ENCODE measurements at regions of chr2 and their contacts with region 1.

Region 1: DNA sequence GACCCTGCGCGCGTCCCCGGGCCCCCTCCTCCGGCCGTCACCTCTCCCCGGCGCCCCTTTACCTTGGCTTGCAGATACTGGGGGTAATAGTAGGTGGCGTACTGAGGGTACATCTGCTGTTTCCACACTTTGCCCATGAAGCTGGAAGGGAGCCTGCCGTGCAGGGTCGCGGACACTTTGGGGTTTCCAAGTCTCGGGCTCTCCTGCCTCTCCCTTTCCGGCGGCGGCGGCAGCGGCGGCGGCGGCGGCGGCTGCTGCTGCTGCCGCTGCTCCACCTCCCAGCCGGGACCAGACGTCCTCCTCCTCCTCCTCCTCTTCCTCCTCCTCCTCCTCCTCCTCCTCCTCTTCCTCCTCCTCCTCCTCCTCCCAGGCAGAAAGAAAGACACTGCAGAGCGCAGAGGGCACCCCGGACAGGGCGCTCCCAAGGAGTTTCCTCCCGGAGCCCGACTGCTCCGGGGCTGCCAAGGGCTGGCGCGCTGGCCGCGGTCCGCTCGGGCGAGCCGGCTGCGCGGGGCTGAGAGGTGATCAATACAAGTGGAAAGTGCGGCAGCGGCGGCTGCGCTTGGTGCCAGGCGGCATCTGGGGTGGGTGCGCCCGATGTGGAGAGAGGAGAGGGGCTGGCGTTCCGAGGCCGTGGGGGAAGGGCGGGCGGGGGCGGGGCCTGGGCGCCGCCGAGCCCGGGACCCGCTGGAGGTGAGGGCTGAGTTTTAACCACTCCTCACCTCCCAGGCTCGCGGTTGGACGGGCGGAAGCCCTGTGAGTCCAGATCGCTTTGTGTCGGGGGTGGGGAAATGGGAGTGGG is at the start of gene RBMS1:
- DNase-seq: peak; percentile 44
- ATAC-seq: peak; percentile 47
- H3K4me3 ChIP-seq: peak within 1 kb of the TSS; percentile 98
- H3K27ac ChIP-seq: peak within 1 kb of the TSS; percentile 100
- H3K4me1 ChIP-seq: peaks cover 6% of the 10 kb centered on the region
- H3K27me3 ChIP-seq: no peaks in the 10 kb centered on the region
- CTCF ChIP-seq: no peak
- POLR2A ChIP-seq: no peak
- RAD21 ChIP-seq: peak; percentile 26; the same call in 1 of the 2 replicates
- total RNA-seq, gene RBMS1: 64.9 and 73.6 TPM in 2 replicates

Region 2: GRCh38 chr2:160324161-160324800 is 169.1 kb before region 1 on chr2:
- CTCF ChIA-PET with region 1: interaction called, 4 read pairs
- POLR2A ChIA-PET with region 1: no interaction called
- dilution Hi-C with region 1: no loop called
- in situ Hi-C with region 1: no loop called
- intact Hi-C with region 1: loop called (anchors 5 kb)
- DNase-seq: peak; percentile 70
- ATAC-seq: peak; percentile 69
- H3K4me3 ChIP-seq: no peak overlapping the region
- H3K27ac ChIP-seq: no peak overlapping the region
- H3K4me1 ChIP-seq: peaks cover 19% of the 10 kb centered on the region
- H3K27me3 ChIP-seq: no peaks in the 10 kb centered on the region
- CTCF ChIP-seq: peak; percentile 71
- POLR2A ChIP-seq: no peak
- RAD21 ChIP-seq: peak; percentile 73

Region 3: DNA sequence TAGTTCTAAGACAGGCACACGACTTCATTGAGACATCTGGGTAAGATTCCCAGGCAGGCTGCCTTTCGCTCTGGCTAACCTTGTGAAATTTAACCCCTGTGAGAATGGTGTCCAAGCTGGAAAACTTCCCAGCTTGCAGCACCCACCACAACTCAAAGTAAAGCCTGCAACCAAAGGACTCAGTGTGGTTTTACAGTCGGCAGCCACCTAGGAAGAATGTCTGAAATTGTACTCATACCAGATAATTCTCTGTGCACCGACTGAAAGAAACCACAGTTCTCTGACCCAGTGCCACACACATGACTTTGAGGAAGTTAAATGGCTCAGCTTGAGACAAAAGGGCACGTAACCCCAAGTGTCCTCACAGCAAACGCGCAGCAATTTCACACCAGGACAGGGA is 125.5 kb before region 1 on chr2:
- CTCF ChIA-PET with region 1: no interaction called
- POLR2A ChIA-PET with region 1: no interaction called
- dilution Hi-C with region 1: no loop called
- in situ Hi-C with region 1: no loop called
- intact Hi-C with region 1: no loop called
- DNase-seq: peak; percentile 98
- ATAC-seq: peak; percentile 59
- H3K4me3 ChIP-seq: no peak overlapping the region
- H3K27ac ChIP-seq: peak overlapping the region; percentile 45; the same call in 1 of the 2 replicates
- H3K4me1 ChIP-seq: peaks cover 37% of the 10 kb centered on the region
- H3K27me3 ChIP-seq: no peaks in the 10 kb centered on the region
- CTCF ChIP-seq: no peak
- POLR2A ChIP-seq: no peak
- RAD21 ChIP-seq: peak; percentile 32; the same call in 1 of the 2 replicates

Region 4: GRCh38 chr2:160482673-160483072 is 10.8 kb before region 1 on chr2:
- CTCF ChIA-PET with region 1: interaction called, 4 read pairs
- POLR2A ChIA-PET with region 1: interaction called, 10 read pairs
- dilution Hi-C with region 1: no loop called
- in situ Hi-C with region 1: no loop called
- intact Hi-C with region 1: no loop called
- DNase-seq: no peak
- ATAC-seq: no peak
- H3K4me3 ChIP-seq: no peak overlapping the region
- H3K27ac ChIP-seq: no peak overlapping the region
- H3K4me1 ChIP-seq: peaks cover 23% of the 10 kb centered on the region
- H3K27me3 ChIP-seq: no peaks in the 10 kb centered on the region
- CTCF ChIP-seq: no peak
- POLR2A ChIP-seq: no peak
- RAD21 ChIP-seq: no peak

Region 5: GRCh38 chr2:160747491-160748169 is 254.2 kb after region 1 on chr2:
- CTCF ChIA-PET with region 1: no interaction called
- POLR2A ChIA-PET with region 1: no interaction called
- dilution Hi-C with region 1: no loop called
- in situ Hi-C with region 1: no loop called
- intact Hi-C with region 1: loop called (anchors 10 kb)
- DNase-seq: peak; percentile 62
- ATAC-seq: peak; percentile 91
- H3K4me3 ChIP-seq: no peak overlapping the region
- H3K27ac ChIP-seq: peak overlapping the region; percentile 20; the same call in 1 of the 2 replicates
- H3K4me1 ChIP-seq: peaks cover 11% of the 10 kb centered on the region
- H3K27me3 ChIP-seq: no peaks in the 10 kb centered on the region
- CTCF ChIP-seq: no peak
- POLR2A ChIP-seq: no peak
- RAD21 ChIP-seq: no peak

Region 6: DNA sequence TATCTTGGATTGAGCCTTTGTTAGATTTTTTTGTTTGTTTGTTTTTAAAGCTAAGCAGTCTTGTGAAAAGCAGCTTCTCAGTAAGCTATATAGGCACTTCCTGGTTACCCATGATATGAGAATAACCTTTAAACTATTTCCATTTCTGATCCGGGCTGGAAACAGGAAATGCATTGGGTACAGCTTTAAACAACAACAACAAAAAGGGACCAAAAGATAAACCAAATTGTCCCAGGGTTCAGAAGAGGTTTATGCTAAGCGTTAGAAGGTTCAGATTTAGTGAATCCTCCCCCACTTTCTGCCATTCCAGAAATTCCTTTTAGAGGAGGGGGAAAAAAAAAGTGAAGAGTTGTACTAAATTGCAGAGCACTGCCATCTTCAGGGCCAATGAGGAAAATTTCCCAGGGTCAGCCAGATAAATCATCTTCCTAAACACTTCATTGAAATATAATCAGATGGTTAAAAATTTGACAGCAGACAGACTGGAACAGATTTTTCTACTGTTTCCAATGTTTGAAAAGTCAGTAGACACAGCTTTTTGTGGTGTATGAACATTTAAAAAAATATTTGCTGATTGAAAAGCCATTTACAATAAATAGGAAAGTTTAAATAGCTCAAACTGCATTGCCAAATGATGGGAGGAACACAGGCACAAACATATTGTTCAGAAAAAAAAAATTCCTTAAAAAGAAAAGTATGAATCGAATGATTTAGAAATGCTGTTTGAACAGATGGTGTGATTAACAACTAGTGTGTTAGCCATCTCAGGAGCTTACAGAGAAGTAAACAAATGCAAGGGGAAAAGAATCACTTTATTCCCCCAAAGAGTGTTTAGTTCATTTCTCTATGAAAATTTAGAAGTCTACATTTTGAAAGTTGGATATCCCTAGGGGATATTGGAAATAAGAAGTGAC is 476.9 kb after region 1 on chr2:
- CTCF ChIA-PET with region 1: no interaction called
- POLR2A ChIA-PET with region 1: interaction called, 3 read pairs
- dilution Hi-C with region 1: no loop called
- in situ Hi-C with region 1: loop called (anchors 5 kb)
- intact Hi-C with region 1: loop called (anchors 1 kb)
- DNase-seq: peak; percentile 82
- ATAC-seq: peak; percentile 82
- H3K4me3 ChIP-seq: no peak overlapping the region
- H3K27ac ChIP-seq: peak overlapping the region; percentile 57; the same call in 1 of the 2 replicates
- H3K4me1 ChIP-seq: peaks cover 2% of the 10 kb centered on the region; the same call in 1 of the 2 replicates
- H3K27me3 ChIP-seq: no peaks in the 10 kb centered on the region
- CTCF ChIP-seq: peak; percentile 86
- POLR2A ChIP-seq: no peak
- RAD21 ChIP-seq: peak; percentile 88